Activated CD4-positive, alpha-beta T cell treated with anti-CD3 and anti-CD28 coated beads, Interleukin-2, amount 10 ng/mL, durations not matched to agents 7 days and 5 days (primary cell): ENCODE measurements at regions of chr2 and their contacts with region 1.

Region 1: DNA sequence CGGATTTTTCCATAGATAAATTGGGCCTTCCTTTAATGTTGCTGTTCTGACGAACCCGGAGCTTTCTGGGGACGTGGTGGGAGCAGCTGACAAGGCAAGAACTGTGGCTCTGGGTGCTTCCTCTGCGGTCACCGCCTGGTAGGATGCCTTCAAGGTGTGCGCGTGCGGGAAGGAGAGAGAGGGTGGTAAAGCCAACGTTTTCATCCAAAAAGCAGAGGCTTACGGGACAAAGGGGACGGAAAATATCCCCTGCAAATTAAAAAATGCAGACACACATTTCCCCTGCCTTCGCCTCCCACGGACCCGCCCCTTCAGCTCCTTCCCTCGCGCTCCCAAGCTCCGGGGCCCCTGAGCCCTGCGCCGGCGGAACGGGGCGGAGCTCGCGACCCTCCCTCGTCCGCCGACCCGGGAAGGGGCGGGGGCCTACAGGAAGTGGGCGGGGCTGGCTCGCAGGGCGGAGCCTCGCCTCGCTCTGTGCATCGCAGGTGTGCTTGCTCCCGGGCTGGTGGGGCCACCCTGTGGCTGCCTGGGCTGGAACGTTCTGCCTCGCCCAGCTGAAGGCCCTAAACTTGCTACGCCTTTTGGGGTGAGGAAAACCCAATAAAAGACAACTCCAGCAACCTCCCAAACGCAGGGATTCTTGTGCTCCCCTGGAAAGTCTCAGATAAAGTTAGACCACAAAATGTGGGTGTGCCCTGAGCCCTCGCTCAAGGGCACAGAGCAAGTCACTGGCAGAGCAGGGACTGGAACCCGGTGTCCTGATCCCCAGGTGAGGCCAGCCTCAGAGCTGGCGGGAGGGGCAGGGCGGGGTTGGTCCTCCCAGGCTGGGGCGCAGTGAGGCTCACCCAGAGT is 25.4 kb upstream of the SLC66A3 start:
- DNase-seq: peak; percentile 81
- H3K4me3 Mint-ChIP-seq: peak overlapping the region; percentile 65
- H3K27ac Mint-ChIP-seq: peak overlapping the region; percentile 80
- H3K4me1 Mint-ChIP-seq: peaks cover 38% of the 10 kb centered on the region
- H3K27me3 Mint-ChIP-seq: peaks cover 7% of the 10 kb centered on the region

Region 2: DNA sequence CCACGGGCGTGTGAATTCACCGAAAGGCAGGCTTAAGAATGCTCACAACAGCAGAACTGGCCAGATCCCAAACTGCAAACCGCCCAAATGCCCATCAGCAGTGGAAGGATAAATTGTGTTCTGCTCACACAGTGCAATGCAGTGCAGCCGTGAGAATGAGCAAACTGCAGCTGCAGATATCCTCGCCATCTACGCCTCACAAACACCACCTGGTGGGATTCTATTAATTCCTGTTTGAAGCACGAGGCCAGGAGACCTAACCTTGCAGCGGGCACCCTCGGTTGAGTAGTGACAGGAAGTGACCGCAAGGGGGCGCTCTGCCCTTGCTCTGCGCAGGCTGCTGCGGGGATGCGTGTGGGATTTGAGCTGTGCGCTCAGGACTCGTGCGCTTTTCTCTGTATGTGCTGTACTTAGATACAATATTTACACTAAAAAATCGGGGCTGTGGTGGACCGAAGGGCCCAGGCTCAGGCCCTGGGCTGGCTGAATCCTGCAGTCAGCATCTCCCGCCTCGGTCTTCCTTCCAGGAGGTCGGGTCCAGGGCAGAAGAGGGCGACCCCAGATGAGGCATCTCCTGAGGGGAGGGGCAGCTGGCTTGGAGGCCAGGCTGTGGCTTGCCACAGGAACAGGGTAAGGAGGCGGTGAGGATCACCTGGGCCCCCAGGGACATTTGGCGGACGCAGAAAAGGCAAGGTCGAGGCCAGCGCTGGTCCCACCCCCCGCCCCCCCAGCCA is 297.5 kb before region 1 on chr2:
- CTCF ChIA-PET with region 1: interaction called, 34 read pairs
- POLR2A ChIA-PET with region 1: no interaction called
- DNase-seq: peak; percentile 86
- H3K4me3 Mint-ChIP-seq: no peak overlapping the region
- H3K27ac Mint-ChIP-seq: peak overlapping the region; percentile 50
- H3K4me1 Mint-ChIP-seq: peaks cover 7% of the 10 kb centered on the region
- H3K27me3 Mint-ChIP-seq: peaks cover 13% of the 10 kb centered on the region

Region 3: DNA sequence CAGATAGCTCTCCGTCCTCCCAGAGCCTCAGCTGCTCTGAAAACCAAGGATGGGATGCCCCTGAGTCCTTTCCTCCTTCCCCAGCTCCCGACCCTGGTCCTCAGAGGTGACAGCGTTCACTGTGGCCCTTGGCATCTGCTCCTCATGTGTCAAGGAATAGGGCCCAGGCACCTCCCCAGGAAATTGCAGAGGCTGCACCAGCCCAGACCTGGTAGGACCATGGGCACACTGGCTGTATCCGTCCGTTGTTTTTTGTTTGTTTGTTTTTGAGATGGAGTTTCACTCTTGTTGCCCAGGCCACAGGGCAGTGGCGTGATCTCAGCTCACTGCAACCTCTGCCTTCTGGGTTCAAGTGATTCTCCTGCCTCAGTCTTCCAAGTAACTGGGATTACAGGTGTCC is 12.0 kb before region 1 on chr2:
- CTCF ChIA-PET with region 1: interaction called, 11 read pairs
- POLR2A ChIA-PET with region 1: no interaction called
- DNase-seq: no peak
- H3K4me3 Mint-ChIP-seq: no peak overlapping the region
- H3K27ac Mint-ChIP-seq: no peak overlapping the region
- H3K4me1 Mint-ChIP-seq: no peaks in the 10 kb centered on the region
- H3K27me3 Mint-ChIP-seq: peaks cover 3% of the 10 kb centered on the region

Region 4: DNA sequence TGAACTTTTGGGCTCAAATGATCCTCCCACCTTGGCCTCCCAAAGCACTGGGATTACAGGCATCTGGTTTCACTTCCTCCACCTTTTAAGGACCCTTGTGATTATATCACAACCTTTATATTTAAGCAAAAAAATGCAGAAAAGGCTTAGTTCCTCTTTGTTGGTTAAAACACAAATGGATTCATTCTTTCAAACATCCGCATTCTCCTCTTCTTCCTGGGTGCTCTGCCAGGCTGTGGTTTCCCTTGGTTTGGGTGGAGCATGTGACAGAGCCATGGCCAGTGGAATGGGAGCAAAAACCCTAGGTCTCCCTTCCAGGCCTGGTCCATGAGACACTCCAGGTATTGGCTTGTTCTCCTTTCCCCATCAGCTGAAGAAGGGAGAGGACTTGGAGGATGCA is 15.5 kb after region 1 on chr2:
- CTCF ChIA-PET with region 1: interaction called, 30 read pairs
- POLR2A ChIA-PET with region 1: no interaction called
- DNase-seq: no peak
- H3K4me3 Mint-ChIP-seq: no peak overlapping the region
- H3K27ac Mint-ChIP-seq: no peak overlapping the region
- H3K4me1 Mint-ChIP-seq: no peaks in the 10 kb centered on the region
- H3K27me3 Mint-ChIP-seq: peaks cover 9% of the 10 kb centered on the region

Region 5: GRCh38 chr2:11465497-11466406 is 335.9 kb after region 1 on chr2 and contains the start of gene E2F6:
- CTCF ChIA-PET with region 1: interaction called, 12 read pairs
- POLR2A ChIA-PET with region 1: no interaction called
- DNase-seq: peak; percentile 83
- H3K4me3 Mint-ChIP-seq: peak within 1 kb of the TSS; percentile 92
- H3K27ac Mint-ChIP-seq: peak within 1 kb of the TSS; percentile 86
- H3K4me1 Mint-ChIP-seq: peaks cover 26% of the 10 kb centered on the region
- H3K27me3 Mint-ChIP-seq: no peaks in the 10 kb centered on the region
- total RNA-seq, gene E2F6: 6.6 to 7.3 TPM

Region 6: DNA sequence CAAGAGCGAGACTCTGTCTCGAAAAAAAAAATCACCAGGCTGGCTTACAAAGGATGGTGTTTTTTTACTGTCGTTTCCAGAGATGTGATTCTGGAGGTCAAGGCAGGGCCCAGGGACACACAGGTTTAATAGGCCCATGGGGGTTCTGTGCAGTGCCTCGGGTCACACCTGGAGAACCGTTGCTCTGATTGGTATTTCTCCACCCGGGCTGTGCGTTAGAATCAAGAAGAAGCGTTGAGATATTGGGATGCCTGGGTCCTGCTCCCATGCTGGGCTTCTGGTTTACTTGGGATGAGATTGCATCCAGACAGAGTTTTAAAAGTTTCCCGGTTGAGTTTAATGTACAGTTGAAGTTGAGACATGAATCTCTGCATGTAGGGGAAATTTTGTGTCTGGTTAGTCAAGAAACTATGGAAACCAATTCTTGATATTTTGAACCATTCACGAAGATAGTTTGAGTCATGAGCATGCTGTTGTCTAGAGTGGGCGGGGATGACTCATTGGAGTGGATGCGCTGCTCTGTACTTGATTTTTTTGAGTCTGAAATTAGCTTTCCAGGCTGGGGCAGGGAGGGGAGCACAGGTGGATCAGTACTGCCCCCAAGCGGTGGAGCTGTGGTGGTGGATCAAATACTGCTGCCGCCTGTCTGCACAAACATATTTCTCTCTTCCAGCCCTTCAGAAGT is 454.2 kb after region 1 on chr2:
- CTCF ChIA-PET with region 1: interaction called, 58 read pairs
- POLR2A ChIA-PET with region 1: no interaction called
- DNase-seq: peak; percentile 67
- H3K4me3 Mint-ChIP-seq: no peak overlapping the region
- H3K27ac Mint-ChIP-seq: no peak overlapping the region
- H3K4me1 Mint-ChIP-seq: peaks cover 3% of the 10 kb centered on the region
- H3K27me3 Mint-ChIP-seq: no peaks in the 10 kb centered on the region